ENCODE measurements at regions of chr11 and their contacts with region 1.

Region 1: GRCh38 chr11:96389720-96390487 is at the starts of genes CCDC82 and JRKL:
- DNase-seq: peak; percentile 90 to 98 (median 94)
- H3K4me3 ChIP-seq: peak within 1 kb of the TSS; percentile 72 to 99 (median 94)
- H3K27ac ChIP-seq: peak within 1 kb of the TSS in 57 of 59 donors; percentile 3 to 95 (median 73)
- H3K27me3 ChIP-seq: no peaks in the 10 kb centered on the region
- CTCF ChIP-seq: peak in 36 of 56 donors; percentile 7 to 51 (median 28)
- total RNA-seq, gene CCDC82: 39.5 to 85.8 (median 56.7) TPM
- total RNA-seq, gene JRKL: 5.2 to 11.8 (median 9.0) TPM

Region 2: DNA sequence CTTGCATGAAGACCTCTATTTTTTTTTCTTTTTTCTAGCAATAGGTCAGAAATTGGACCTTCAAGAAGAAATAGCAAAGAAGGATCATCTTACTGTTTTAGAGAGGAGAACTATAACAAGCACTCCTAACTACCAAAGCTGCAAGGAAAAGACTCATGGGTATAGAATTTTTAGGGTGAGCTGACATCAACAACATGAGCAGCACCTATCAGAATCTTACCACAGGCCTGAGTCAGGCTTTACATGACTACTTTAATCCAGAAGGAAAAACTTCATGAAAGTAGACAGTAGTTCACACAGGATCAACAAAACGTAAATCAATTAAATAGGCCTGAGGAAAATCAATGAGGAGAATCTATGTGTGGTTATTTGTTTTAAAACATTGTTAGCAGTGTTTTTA is 730.8 kb before region 1 on chr11:
- intact Hi-C with region 1: no loop called
- DNase-seq: no peak
- H3K4me3 ChIP-seq: no peak overlapping the region
- H3K27ac ChIP-seq: peak overlapping the region in 1 of 59 donors; percentile 7
- H3K27me3 ChIP-seq: no peaks in the 10 kb centered on the region
- CTCF ChIP-seq: no peak

Region 3: GRCh38 chr11:95790123-95790932 is 599.6 kb before region 1 on chr11 and contains the start of gene CEP57:
- intact Hi-C with region 1: loop called (anchors 5 to 10 kb)
- DNase-seq: peak; percentile 76 to 96 (median 94)
- H3K4me3 ChIP-seq: peak within 1 kb of the TSS; percentile 66 to 100 (median 94)
- H3K27ac ChIP-seq: peak within 1 kb of the TSS; percentile 67 to 99 (median 97)
- H3K27me3 ChIP-seq: no peaks in the 10 kb centered on the region
- CTCF ChIP-seq: peak in 1 of 56 donors; percentile 11
- total RNA-seq, gene CEP57: 25.0 to 49.2 (median 36.1) TPM

Region 4: GRCh38 chr11:95835768-95836488 is 554.0 kb before region 1 on chr11:
- intact Hi-C with region 1: loop called in 1 of 2 experiments (anchors 10 kb)
- DNase-seq: peak in 7 of 10 donors; percentile 42 to 77 (median 50)
- H3K4me3 ChIP-seq: no peak overlapping the region
- H3K27ac ChIP-seq: peak overlapping the region in 52 of 59 donors; percentile 6 to 82 (median 58)
- H3K27me3 ChIP-seq: no peaks in the 10 kb centered on the region
- CTCF ChIP-seq: peak; percentile 67 to 96 (median 85)

Region 5: DNA sequence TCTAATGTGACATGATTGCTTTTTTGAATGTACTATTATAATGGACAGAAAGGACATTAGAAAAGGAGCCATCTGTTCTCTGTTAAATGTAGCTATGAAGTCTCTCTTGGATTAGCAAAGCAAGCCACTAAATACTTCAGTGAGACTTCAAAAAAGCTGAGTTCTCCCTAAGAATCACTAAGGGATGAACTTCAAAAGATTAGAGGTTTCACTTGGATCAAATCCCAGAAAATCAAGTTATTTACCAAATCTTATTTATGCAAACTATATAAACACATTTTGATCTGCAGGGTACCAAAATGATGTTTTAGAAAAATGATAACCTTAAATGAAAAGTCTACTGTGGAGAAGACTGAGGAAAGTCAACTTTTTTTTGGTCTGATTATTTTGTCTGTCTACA is 383.9 kb before region 1 on chr11:
- intact Hi-C with region 1: loop called in 1 of 2 experiments (anchors 2 kb)
- DNase-seq: no peak
- H3K4me3 ChIP-seq: no peak overlapping the region
- H3K27ac ChIP-seq: no peak overlapping the region
- H3K27me3 ChIP-seq: no peaks in the 10 kb centered on the region
- CTCF ChIP-seq: no peak

Region 6: DNA sequence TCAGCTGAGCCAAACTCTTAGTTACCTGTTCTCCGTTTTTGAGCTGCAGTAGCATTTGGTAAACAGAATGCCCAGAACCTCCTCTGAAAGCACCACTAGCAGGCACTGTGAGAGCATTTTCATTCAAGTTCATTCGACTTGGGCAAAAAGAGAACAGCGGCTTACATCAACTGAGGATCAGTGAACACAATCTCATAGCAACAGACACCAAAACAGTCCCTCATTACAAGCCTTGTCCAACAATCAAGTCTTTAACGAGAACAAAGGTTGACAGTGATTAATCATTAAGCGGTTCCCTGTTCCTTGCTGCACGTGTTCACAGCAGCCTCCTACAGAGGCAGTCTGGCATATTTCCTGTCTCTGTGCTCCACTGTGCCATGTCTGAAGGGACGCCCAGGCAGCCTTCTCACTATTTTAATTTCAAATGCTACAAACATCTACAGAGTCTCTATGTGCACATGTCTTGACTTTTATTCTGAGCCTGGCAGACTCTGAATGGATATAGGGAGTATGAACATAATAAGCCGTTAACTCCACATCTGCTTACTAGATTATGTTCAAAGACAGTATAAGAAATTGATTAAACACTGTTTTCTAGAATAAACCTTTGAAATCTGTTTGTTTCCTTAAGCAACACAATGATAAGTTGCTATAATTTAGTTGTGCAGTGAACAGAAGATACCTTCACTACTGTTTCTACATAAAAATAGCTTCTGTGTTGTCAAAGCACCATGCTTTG is 377.6 kb before region 1 on chr11:
- intact Hi-C with region 1: loop called in 1 of 2 experiments (anchors 2 kb)
- DNase-seq: peak in 9 of 10 donors; percentile 39 to 76 (median 55)
- H3K4me3 ChIP-seq: peak overlapping the region in 45 of 59 donors; percentile 4 to 48 (median 29)
- H3K27ac ChIP-seq: peak overlapping the region in 57 of 59 donors; percentile 4 to 86 (median 63)
- H3K27me3 ChIP-seq: no peaks in the 10 kb centered on the region
- CTCF ChIP-seq: peak in 55 of 56 donors; percentile 40 to 85 (median 66)

Region 7: DNA sequence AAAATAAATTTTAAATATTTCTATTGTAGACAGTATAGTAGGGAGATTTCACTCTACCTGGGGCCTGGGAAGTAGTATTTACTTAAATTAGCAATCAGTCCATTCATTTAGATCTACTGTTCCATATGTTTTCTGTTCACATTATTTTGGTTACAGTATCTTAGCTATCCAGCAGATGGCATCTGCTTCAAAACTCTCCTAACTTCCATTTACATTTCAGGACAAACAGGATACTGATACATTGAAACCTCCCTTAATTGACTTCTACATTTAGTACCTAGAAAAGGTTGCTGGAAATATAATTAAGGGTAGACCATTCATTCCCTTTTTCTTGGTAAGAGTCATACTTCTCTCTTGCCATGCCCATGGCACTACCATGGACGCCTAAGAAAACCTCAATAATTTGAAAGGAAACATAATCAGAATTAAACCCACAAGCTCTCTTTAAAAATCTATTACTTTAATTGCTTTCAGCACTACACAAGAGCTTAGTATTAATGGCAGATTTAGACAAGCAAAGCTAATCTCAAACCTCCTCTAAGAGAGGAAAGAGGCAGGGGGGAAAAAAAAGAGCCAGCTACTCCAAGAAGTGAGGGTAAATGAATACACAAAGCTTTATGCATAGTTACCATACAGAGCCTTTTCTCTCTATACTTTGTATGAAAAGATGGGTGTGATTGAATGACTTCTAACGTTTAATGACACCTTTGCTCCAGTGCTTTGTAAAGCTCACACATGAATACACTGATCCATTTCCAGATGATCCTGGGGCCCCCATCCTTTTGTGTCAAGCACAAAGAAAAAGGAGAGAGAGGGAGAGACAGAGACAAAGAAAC is 334.8 kb before region 1 on chr11:
- intact Hi-C with region 1: loop called in 1 of 2 experiments (anchors 5 kb)
- DNase-seq: no peak
- H3K4me3 ChIP-seq: no peak overlapping the region
- H3K27ac ChIP-seq: peak overlapping the region in 2 of 59 donors; percentile 6 to 11
- H3K27me3 ChIP-seq: no peaks in the 10 kb centered on the region
- CTCF ChIP-seq: peak; percentile 58 to 87 (median 75)

Measured in dorsolateral prefrontal cortex (tissue), 120 donors.